SK-N-SH (cell line): ENCODE measurements at regions of chr1 and their contacts with region 1.

Region 1: DNA sequence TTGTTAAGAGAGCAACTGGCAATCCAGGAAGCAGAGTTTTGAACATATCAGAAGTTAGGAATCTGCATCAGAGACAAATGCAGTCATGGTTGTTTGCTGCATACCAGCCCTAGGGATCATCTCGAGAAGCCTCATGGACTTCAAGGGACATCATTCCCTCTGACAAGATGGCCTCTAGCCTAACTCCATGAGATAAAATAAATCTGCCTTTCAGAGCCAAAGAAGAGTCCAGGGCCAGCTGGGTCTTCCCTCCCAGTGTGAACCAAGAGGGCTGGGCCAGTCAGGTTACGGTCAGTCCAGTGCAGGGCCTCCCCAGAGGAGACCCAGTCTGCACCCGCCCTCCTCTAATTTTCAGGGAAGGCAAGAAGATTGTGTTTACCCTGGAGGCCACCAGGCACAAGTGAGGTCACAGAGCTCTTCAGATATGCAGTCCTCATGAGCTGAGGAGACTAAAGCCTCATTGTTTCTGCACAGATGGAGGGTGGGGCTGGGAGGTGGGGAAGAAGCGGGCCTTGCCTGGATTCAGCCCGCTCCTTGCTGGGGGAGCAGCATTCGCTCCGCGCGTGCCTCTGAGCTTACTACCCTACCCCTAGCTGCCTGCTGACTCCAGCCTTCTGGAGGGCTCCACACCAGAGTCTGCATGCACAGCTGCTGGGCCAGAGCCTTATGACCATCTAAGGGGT is 52.8 kb downstream of the CAPN2 start:
- DNase-seq: no peak
- H3K4me3 ChIP-seq: no peak overlapping the region
- H3K27ac ChIP-seq: no peak overlapping the region
- H3K4me1 ChIP-seq: no peaks in the 10 kb centered on the region
- H3K27me3 ChIP-seq: no peaks in the 10 kb centered on the region
- CTCF ChIP-seq: no peak
- EP300 ChIP-seq: no peak
- RAD21 ChIP-seq: no peak

Region 2: DNA sequence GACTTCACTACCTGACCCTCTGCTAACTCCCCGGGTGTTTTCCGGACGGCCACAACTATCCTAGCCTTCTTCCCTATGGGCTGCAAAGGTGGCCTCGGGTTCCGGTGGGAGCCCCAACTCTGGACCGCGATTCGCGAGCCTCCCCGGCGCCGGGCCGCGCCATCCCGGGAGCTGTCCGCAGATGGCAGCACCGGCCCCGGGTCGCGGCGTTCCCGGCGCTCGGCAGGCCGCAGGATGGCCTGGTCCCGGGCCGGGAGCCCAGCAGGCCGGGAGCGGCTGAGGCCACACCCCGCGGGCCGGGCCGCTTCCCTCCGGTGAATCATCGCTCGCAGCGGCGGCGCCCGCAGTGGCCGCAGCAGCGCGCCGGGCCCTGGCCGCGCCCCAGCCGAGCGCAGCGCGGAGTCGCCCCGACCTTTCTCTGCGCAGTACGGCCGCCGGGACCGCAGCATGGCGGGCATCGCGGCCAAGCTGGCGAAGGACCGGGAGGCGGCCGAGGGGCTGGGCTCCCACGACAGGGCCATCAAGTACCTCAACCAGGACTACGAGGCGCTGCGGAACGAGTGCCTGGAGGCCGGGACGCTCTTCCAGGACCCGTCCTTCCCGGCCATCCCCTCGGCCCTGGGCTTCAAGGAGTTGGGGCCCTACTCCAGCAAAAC is 52.9 kb before region 1 on chr1 and contains the start of gene CAPN2:
- CTCF ChIA-PET with region 1: interaction called, 13 read pairs
- POLR2A ChIA-PET with region 1: no interaction called
- DNase-seq: peak; percentile 96
- H3K4me3 ChIP-seq: peak within 1 kb of the TSS; percentile 72 to 83
- H3K27ac ChIP-seq: peak within 1 kb of the TSS; percentile 85 to 88
- H3K4me1 ChIP-seq: peaks cover 42 to 58% of the 10 kb centered on the region in 2 experiments
- H3K27me3 ChIP-seq: no peaks in the 10 kb centered on the region
- CTCF ChIP-seq: peak; percentile 63
- EP300 ChIP-seq: no peak
- RAD21 ChIP-seq: peak; percentile 64
- polyA plus RNA-seq, gene CAPN2: 208 and 209 TPM in 2 replicates